ENCODE measurements at regions of chr19 and their contacts with region 1.

Region 1: DNA sequence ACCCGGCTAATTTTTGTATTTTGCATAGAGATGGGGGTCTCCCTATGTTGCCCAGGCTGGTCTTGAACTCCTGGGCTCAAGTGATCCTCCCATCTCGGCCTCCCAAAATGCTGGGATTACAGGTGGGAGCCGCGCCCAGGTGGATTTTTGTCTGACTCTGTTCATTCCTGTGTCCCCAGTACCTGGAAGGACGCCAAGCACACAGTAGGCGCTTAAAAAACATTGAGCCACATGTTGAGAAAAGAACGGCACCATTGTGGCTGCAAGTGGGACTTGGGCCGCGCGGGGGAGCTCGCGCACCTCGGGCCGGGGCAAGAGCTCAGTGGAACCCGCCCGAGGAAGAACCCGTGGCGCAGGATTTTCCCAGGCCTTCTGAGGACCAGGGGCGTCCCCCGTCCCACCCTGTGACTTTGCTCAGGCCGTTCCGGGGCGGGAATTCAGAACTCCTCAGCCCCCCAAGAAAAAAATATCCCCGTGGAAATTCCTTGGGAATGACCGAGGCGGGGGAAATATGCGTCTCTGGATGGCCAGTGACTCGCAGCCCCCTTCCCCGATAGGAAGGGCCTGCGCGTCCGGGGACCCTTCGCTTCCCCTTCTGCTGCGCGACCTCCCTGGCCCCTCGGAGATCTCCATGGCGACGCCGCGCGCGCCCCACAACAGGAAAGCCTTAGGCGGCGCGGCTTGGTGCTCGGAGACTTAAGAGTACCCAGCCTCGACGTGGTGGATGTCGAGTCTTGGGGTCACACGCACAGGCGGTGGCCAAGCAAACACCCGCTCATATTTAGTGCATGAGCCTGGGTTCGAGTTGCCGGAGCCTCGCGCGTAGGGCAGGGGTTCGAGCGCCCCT is 1.4 kb upstream of the ICAM1 start:
- DNase-seq: peak; percentile 93
- ATAC-seq: peak; percentile 68
- H3K4me3 Mint-ChIP-seq: peak overlapping the region; percentile 81
- H3K27ac Mint-ChIP-seq: peak overlapping the region; percentile 89
- H3K4me1 Mint-ChIP-seq: peaks cover 32% of the 10 kb centered on the region
- H3K27me3 Mint-ChIP-seq: no peaks in the 10 kb centered on the region

Region 2: DNA sequence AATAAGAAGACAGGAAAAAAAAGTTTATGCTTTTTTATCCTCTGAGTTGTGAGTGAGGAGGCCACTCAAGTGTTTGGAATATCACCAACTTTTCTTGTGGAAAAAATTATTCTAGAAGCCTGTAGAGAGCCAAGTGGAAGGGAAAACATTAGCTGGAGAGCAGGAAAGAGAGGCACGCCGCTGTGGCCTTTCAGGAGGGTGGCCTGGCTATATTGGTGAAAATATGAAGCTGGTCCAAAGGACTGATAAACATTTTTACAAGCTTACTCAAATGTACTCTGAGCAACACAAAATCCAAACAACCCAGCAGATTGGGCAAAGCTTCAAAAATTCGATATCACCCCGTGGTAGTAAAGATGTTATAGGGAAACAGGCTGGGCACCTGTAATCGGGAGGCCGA is 147.5 kb before region 1 on chr19:
- CTCF ChIA-PET with region 1: no interaction called
- DNase-seq: no peak
- ATAC-seq: no peak
- H3K4me3 Mint-ChIP-seq: no peak overlapping the region
- H3K27ac Mint-ChIP-seq: no peak overlapping the region
- H3K4me1 Mint-ChIP-seq: peaks cover 19% of the 10 kb centered on the region
- H3K27me3 Mint-ChIP-seq: no peaks in the 10 kb centered on the region

Region 3: GRCh38 chr19:10238172-10238783 is 31.3 kb before region 1 on chr19:
- CTCF ChIA-PET with region 1: no interaction called
- DNase-seq: no peak
- ATAC-seq: no peak
- H3K4me3 Mint-ChIP-seq: no peak overlapping the region
- H3K27ac Mint-ChIP-seq: no peak overlapping the region
- H3K4me1 Mint-ChIP-seq: peaks cover 26% of the 10 kb centered on the region
- H3K27me3 Mint-ChIP-seq: no peaks in the 10 kb centered on the region

Region 4: GRCh38 chr19:10251792-10252694 is 17.5 kb before region 1 on chr19 and contains the start of gene MRPL4:
- CTCF ChIA-PET with region 1: interaction called, 125 read pairs
- DNase-seq: peak; percentile 99
- ATAC-seq: peak; percentile 98
- H3K4me3 Mint-ChIP-seq: peak within 1 kb of the TSS; percentile 99
- H3K27ac Mint-ChIP-seq: peak within 1 kb of the TSS; percentile 96
- H3K4me1 Mint-ChIP-seq: peaks cover 37% of the 10 kb centered on the region
- H3K27me3 Mint-ChIP-seq: no peaks in the 10 kb centered on the region
- total RNA-seq, gene MRPL4: 85.4 to 112 TPM

Region 5: DNA sequence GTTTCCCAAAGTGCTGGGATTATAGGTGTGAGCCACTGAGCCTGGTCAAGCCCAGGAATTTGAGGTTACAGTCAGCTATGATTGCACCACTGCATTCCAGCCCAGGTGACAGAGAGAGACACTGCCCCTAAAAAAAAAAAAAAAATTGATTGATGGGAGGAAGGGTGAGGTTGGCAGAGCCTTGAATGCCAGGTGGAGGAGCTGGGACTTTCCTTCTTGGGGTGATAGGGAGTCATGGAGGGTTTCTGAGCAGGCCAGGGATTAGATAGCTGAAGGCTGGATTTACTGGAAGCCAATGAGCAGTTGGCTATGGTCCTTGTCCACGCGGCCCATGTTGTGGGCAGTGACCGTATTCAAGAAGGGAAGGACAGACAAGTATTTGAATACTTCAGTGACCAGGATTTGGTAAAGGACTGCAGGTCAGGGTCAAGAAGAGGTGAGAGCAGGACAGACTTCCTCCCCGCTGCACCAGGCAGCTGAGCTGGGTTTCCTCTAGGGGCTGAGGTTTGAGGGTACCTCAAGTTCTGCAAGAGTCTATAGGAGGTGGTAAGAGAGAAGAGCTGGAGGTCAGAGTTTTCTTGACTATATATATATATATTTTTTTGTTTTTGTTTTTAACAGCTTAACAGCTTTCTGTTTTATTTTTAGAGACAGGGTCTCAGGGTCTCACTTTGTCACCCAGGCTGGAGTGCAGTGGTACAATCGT is 10.3 kb after region 1 on chr19:
- CTCF ChIA-PET with region 1: interaction called, 116 read pairs
- DNase-seq: peak; percentile 60
- ATAC-seq: peak; percentile 75
- H3K4me3 Mint-ChIP-seq: peak overlapping the region; percentile 40
- H3K27ac Mint-ChIP-seq: peak overlapping the region; percentile 75
- H3K4me1 Mint-ChIP-seq: peaks cover 34% of the 10 kb centered on the region
- H3K27me3 Mint-ChIP-seq: no peaks in the 10 kb centered on the region

Region 6: DNA sequence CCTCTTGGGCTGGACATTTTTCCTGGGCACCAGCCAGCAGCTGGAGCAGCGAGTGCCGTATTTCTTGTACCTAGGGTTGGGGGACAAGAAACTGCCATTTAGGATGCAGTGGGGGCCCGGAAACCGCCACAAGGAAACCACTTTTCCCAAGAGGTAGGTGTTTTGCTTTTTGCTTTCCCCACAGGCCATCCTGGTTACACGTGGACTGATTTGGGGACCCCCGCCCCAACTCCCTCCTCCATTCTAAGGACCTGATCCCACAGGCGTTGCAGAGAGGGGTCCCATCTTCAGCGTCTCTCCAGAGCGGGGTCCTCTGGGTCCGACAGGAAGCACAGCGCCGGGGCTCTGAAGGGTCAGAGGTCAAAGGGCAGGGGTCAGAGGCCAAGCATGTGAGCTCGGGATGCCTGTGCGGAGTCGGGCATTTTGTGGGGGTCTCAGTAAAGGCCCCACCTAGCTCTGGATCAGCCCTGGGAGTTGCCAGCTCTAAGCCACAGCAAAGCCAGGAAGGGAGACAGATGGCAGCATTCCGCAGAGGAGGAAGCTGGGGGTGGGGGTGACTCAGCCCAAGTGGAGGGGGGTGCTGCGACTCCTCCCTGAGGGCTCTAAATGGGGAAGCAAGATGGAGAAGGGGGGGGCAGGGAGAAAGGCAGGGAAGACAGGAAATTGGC is 35.7 kb after region 1 on chr19:
- CTCF ChIA-PET with region 1: interaction called, 18 read pairs
- DNase-seq: no peak
- ATAC-seq: peak; percentile 12
- H3K4me3 Mint-ChIP-seq: no peak overlapping the region
- H3K27ac Mint-ChIP-seq: no peak overlapping the region
- H3K4me1 Mint-ChIP-seq: no peaks in the 10 kb centered on the region
- H3K27me3 Mint-ChIP-seq: peaks cover 6% of the 10 kb centered on the region

Region 7: GRCh38 chr19:10380313-10381102 is 111.0 kb after region 1 on chr19 and contains the start of gene TYK2:
- CTCF ChIA-PET with region 1: interaction called, 320 read pairs
- DNase-seq: peak; percentile 98
- ATAC-seq: peak; percentile 97
- H3K4me3 Mint-ChIP-seq: peak within 1 kb of the TSS; percentile 90
- H3K27ac Mint-ChIP-seq: peak within 1 kb of the TSS; percentile 94
- H3K4me1 Mint-ChIP-seq: peaks cover 21% of the 10 kb centered on the region
- H3K27me3 Mint-ChIP-seq: no peaks in the 10 kb centered on the region
- total RNA-seq, gene TYK2: 277 to 296 TPM

Region 8: DNA sequence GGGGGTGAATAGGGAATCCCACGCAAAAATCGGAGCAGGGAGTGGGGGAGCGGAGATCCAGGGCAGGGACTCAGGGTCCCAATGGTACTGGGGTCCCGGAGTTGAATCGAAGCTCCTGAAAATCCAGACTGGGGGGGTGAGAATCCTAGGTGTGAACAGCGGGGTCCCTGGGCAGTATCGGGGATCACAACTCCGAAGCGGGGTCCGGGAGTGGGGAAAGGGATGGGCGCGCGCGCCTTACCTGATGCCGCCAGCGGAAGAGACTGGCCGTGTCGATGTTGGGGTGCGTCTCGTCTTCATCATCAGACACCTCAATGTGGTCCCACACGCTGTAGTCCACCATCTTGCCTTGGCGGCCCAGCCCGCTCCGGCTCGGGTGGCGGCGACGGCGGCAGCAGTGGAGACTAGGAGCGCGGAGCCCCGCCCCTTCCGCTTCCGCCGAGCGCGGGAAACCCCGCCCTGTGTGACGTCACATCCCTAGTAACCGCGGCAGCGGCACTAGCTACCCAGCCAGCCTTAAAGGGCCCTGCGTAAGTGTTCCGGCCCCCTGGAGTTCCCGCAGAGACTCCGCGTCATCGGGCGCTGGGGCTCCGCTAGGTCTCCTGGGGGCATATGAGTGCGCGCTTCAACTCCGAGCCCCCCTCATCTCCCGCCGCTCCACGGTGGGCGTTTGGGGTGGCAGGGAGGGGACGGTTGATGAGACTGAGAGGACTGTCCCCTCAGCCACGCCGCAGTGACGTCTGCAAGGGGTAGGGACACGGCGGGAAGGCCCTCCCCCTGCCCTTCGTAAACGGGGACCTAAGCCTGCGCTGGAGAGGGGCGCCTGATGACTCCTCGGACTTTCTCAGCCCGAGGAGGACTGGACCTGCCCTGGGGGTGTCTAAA is 133.8 kb after region 1 on chr19 and contains the start of gene CDC37:
- CTCF ChIA-PET with region 1: interaction called, 21 read pairs
- DNase-seq: peak; percentile 98
- ATAC-seq: peak; percentile 71
- H3K4me3 Mint-ChIP-seq: peak within 1 kb of the TSS; percentile 97
- H3K27ac Mint-ChIP-seq: peak within 1 kb of the TSS; percentile 93
- H3K4me1 Mint-ChIP-seq: peaks cover 60% of the 10 kb centered on the region
- H3K27me3 Mint-ChIP-seq: no peaks in the 10 kb centered on the region
- total RNA-seq, gene CDC37: 283 to 309 TPM

Region 9: GRCh38 chr19:10424011-10424637 is 154.6 kb after region 1 on chr19:
- CTCF ChIA-PET with region 1: interaction called, 25 read pairs
- DNase-seq: peak; percentile 78
- ATAC-seq: peak; percentile 16
- H3K4me3 Mint-ChIP-seq: peak overlapping the region; percentile 81
- H3K27ac Mint-ChIP-seq: peak overlapping the region; percentile 95
- H3K4me1 Mint-ChIP-seq: peaks cover 82% of the 10 kb centered on the region
- H3K27me3 Mint-ChIP-seq: peaks cover 2% of the 10 kb centered on the region